GM10248 (cell line): ENCODE measurements at regions of chr3 and their contacts with region 1.

Region 1: DNA sequence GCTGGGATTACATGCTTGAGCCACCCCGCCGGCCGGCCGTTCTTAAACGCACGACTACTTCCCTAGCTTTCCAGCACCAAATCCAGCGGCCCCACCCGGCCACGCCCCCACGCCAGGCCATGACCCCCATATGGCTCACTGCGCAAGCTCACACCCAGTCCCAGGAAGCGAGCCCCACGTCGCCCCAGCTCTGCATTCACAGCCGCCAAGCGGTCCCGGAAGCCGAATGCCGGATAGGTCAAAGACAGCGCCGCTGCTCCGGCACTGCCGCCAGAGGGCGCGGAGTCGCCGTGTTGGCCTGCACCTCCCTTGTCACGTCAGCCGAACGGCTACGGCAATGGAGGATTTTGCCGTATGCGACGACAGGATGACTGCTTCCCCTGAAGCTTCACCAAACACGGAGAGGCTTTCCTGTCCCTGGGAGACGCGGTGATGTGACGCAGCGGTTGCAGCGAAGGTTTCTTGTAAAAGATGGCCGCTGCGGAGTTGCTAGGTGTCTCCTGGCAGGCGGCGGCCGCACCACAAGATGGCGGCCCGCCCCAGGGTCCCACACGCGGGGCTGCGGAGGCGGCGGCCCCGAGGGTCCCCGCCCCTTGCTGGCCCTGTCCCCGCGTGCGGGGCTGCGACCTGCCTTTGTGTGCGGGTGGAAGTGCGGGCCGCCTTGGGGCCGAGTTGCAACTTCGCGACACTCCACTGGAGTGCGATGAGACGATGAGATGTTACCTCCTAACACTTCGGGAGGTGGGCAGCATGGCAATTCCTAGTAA is 30.2 kb upstream of the RPN1 start:
- DNase-seq: peak; percentile 97
- CTCF ChIP-seq: peak; percentile 99

Region 2: GRCh38 chr3:128667641-128668040 is 13.1 kb before region 1 on chr3:
- CTCF ChIA-PET with region 1: interaction called, 34 read pairs
- POLR2A ChIA-PET with region 1: no interaction called
- DNase-seq: no peak
- CTCF ChIP-seq: no peak

Region 3: GRCh38 chr3:128707928-128708494 is 27.2 kb after region 1 on chr3:
- CTCF ChIA-PET with region 1: interaction called, 25 read pairs
- POLR2A ChIA-PET with region 1: no interaction called
- DNase-seq: no peak
- CTCF ChIP-seq: no peak

Region 4: DNA sequence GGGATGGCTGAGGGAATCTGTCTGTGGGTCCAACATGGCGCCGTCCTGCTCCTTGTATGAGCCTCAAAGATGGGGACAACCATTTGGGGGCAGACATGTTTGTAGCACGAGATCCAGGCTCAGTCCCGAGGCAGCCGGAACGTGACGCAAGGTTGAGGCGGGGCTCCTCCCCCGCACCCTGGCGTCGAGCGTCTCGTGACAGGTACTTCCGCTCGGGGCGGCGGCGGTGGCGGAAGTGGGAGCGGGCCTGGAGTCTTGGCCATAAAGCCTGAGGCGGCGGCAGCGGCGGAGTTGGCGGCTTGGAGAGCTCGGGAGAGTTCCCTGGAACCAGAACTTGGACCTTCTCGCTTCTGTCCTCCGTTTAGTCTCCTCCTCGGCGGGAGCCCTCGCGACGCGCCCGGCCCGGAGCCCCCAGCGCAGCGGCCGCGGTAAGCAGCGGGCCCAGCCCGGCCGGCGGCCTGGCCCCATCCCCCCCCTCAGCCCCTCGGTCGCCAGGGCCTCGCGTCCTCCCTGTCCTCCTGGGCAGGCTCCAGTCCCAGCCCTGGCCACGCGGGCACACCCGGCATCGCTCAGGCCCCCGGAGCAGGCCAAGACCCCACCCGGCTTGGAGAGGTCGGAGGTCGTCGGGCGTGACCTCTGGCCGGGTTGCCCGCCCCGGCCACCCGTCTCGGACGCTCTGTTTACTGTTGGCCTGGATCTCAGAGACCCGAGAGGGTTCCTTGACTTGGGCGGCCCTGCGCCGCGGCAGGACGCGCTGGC is 45.3 kb after region 1 on chr3 and contains the start of gene RAB7A:
- CTCF ChIA-PET with region 1: interaction called, 19 read pairs
- POLR2A ChIA-PET with region 1: interaction called, 4 read pairs
- DNase-seq: peak; percentile 96
- CTCF ChIP-seq: no peak

Region 5: DNA sequence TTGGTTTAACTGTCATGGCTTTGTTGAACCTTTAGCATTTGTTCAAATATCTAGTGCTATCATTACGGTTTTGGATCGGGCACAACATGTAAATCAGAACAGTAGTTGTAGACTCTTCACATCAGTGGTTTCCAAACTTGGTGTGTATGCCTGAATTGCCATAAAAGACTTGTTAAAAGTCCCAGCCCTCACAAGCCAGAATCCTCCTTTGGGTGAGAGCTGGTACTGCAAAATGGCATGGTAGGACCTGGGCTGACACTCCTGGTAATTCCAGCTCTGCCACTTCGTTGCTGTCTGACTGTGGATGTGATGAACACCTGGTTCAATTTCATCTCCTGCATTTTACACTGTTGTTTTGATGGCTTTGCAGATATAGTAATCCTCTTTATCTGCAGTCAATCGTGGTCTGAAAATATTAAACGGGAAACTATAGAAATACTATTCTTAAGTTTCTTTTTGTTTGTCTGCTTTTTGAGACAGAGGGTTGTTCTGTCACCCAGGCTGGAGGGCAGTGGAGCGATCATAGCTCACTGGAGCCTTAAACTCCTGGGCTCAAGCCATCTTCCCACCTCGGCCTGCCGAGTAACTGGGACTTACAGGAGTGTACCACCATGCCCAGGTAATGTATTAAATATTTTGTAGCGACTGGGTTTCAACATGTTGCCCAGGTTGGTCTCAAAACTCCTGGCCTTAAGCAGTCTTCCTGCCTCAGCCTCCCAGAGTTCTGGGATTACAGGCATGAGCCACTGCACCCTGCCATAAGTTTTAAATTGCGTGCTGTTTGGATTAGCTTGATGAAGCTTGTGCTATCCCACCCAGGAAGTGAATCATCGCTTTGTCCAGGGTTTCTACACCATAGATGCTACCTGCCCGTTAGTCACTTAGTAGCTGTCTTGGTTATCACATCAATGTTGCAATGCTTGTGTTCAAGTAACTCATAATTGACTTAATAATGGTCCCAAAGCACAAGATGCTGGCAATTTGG is 106.8 kb after region 1 on chr3:
- CTCF ChIA-PET with region 1: interaction called, 27 read pairs
- POLR2A ChIA-PET with region 1: no interaction called
- DNase-seq: peak; percentile 37
- CTCF ChIP-seq: no peak

Region 6: GRCh38 chr3:128804017-128804810 is 123.4 kb after region 1 on chr3:
- CTCF ChIA-PET with region 1: interaction called, 46 read pairs
- POLR2A ChIA-PET with region 1: no interaction called
- DNase-seq: peak; percentile 86
- CTCF ChIP-seq: no peak

Region 7: GRCh38 chr3:128879125-128879969 is 198.6 kb after region 1 on chr3 and contains the start of gene ACAD9:
- CTCF ChIA-PET with region 1: interaction called, 13 read pairs
- POLR2A ChIA-PET with region 1: interaction called, 4 read pairs
- DNase-seq: peak; percentile 100
- CTCF ChIP-seq: no peak